H1 (cell line): ENCODE measurements at regions of chr17 and their contacts with region 1.

Region 1: DNA sequence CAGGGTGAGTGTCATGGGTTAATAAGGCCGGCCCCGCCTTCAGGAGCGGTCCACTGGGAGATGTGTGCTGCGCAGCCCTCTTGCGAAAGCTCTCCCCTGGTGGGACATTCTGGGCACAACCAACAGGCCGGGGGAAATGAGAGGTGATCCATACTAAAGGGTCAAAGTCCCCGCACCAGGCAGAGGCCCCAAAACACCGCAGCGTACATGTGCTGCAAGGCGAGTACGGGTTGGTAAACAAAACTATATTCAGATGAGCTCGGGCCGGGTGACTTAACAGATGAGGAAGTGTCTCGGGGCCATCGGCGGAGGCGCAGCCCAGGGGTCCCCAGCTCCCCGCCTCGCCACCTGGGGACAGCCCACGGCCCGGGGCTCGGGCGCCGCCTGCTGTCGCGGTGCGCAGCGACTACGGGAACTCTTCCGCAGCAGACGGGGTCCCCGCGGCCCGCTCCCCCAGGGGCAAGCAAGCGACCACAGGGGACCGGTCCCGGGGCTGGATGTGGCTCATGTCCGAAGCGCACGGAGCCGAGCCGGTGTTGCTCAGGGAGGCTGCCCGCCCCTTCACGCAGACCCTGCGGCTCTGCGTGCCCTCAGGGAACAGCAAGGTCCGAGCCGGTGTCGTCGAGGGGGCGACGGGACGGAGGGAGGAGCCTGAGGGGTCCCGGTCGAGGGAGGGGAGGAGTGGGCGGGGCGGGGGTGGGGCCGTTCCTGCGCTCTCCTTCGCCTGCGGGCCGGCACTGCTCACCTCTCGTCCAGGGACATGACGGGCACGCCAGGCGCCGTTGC is at the start of gene RAB37:
- DNase-seq: peak in 1 of 2 experiments; percentile 86
- H3K4me3 ChIP-seq: peak within 1 kb of the TSS; percentile 55 to 75 (median 66)
- H3K27ac ChIP-seq: no peak within 1 kb of the TSS
- H3K4me1 ChIP-seq: peaks cover 5 to 18% (median 9%) of the 10 kb centered on the region in 4 experiments
- H3K27me3 ChIP-seq: peaks cover 0 to 8% (median 2%) of the 10 kb centered on the region in 4 experiments; a peak in 4 of 7 replicates
- CTCF ChIP-seq: peak; percentile 41 to 64 (median 60)
- EP300 ChIP-seq: peak in 1 of 2 experiments; percentile 16; a peak in 1 of 3 replicates
- POLR2A ChIP-seq: no peak
- RAD21 ChIP-seq: peak; percentile 46 to 65; a peak in 3 of 4 replicates
- total RNA-seq, gene RAB37: 5.2 and 5.5 TPM in 2 replicates

Region 2: DNA sequence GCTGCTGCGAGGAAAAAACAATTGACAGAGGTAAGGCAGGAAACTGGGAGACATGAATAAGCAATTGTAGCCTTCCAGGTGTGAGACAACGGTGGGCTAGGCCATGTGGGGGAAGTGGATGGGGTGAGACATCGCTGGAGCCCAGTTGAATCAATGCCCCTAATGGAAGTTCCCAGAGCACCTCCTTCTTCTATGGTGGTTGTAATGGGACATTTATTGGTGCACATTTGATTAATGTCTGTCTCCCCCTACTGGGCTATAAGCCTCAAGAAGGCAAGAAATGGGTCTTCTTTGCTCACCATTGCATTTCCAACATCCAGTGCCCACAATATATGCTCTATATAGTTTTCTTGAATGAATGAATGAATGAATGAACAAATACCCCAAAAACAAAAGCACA is 90.5 kb before region 1 on chr17:
- CTCF ChIA-PET with region 1: interaction called, 17 read pairs
- POLR2A ChIA-PET with region 1: no interaction called
- DNase-seq: no peak
- H3K4me3 ChIP-seq: no peak overlapping the region
- H3K27ac ChIP-seq: no peak overlapping the region
- H3K4me1 ChIP-seq: peaks cover 0 to 2% (median 2%) of the 10 kb centered on the region in 4 experiments; a peak in 2 of 7 replicates
- H3K27me3 ChIP-seq: peaks cover 0 to 2% (median 0%) of the 10 kb centered on the region in 4 experiments; a peak in 2 of 7 replicates
- CTCF ChIP-seq: peak in 2 of 3 experiments; percentile 49 to 54; a peak in 3 of 4 replicates
- EP300 ChIP-seq: no peak
- POLR2A ChIP-seq: no peak
- RAD21 ChIP-seq: peak; percentile 51 to 59

Region 3: GRCh38 chr17:74671031-74671771 is 65.5 kb before region 1 on chr17:
- CTCF ChIA-PET with region 1: interaction called, 19 read pairs
- POLR2A ChIA-PET with region 1: interaction called, 4 read pairs
- DNase-seq: peak; percentile 81 to 97
- H3K4me3 ChIP-seq: peak overlapping the region in 2 of 4 experiments; percentile 11 to 32; a peak in 2 of 8 replicates
- H3K27ac ChIP-seq: no peak overlapping the region
- H3K4me1 ChIP-seq: no peaks in the 10 kb centered on the region; a peak in 1 of 7 replicates
- H3K27me3 ChIP-seq: peaks cover 10 to 53% (median 35%) of the 10 kb centered on the region in 4 experiments
- CTCF ChIP-seq: no peak
- EP300 ChIP-seq: no peak
- POLR2A ChIP-seq: no peak
- RAD21 ChIP-seq: no peak; a peak in 1 of 4 replicates

Region 4: DNA sequence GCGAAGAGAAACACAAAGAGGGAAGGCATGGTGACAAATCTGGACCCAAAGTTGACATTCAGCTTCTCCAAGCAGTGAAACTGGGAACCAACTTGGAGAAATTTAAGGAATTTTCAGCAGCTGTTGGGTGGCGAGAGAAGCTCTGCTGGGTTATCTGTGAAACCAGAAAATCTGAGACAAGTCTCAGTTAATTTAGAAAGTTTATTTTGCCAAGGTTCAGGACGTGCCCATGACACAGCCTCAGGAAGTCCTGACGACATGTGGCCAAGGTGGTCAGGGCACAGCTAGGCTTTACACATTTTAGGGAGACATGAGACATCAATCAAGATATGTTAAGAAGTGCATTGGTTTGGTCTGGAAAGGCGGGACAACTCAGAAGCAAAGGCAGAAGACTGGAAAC is 12.8 kb before region 1 on chr17:
- CTCF ChIA-PET with region 1: interaction called, 27 read pairs
- POLR2A ChIA-PET with region 1: no interaction called
- DNase-seq: no peak
- H3K4me3 ChIP-seq: no peak overlapping the region
- H3K27ac ChIP-seq: no peak overlapping the region
- H3K4me1 ChIP-seq: no peaks in the 10 kb centered on the region
- H3K27me3 ChIP-seq: no peaks in the 10 kb centered on the region; a peak in 3 of 7 replicates
- CTCF ChIP-seq: no peak
- EP300 ChIP-seq: no peak
- POLR2A ChIP-seq: no peak
- RAD21 ChIP-seq: no peak

Region 5: GRCh38 chr17:74770498-74771318 is 34.0 kb after region 1 on chr17:
- CTCF ChIA-PET with region 1: interaction called, 37 read pairs
- POLR2A ChIA-PET with region 1: interaction called, 12 read pairs
- DNase-seq: peak in 1 of 2 experiments; percentile 82
- H3K4me3 ChIP-seq: no peak overlapping the region
- H3K27ac ChIP-seq: no peak overlapping the region; the same call in 1 of the 2 replicates
- H3K4me1 ChIP-seq: peaks cover 0 to 2% (median under 1%) of the 10 kb centered on the region in 4 experiments; a peak in 3 of 7 replicates
- H3K27me3 ChIP-seq: no peaks in the 10 kb centered on the region
- CTCF ChIP-seq: peak; percentile 93 to 99 (median 96)
- EP300 ChIP-seq: no peak
- POLR2A ChIP-seq: no peak; a peak in 1 of 3 replicates
- RAD21 ChIP-seq: peak; percentile 96

Region 6: DNA sequence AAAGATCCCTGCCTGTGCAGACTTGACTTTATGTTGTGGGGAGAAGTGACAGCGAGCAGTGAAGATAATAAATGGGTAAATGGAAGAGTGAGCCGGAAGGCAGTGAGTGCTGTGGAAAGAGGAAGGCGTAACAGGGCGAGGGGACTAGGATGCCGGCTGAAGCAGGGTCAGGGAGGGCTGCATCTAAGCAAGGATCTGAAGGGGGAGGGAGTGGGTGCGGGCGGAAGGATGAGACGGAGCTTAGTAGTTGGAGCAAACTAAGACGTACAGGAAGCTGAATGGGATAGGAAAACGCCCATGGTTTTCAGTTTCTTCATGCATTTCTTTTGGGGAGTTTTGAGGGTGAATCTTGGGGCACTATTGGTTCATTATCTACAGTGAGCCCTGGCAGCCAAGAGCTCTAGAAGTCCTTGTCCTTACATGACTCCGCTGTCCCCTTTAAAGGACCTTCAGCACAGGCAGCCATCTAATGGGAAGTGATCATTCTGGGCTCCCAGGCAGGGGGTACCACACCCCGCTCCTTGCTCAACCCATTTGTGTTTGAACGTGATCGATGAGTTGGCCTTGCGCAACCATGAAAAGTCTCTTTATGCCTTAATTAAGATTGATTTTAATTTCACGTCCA is 49.8 kb after region 1 on chr17:
- CTCF ChIA-PET with region 1: interaction called, 18 read pairs
- POLR2A ChIA-PET with region 1: interaction called, 3 read pairs
- DNase-seq: no peak
- H3K4me3 ChIP-seq: no peak overlapping the region
- H3K27ac ChIP-seq: no peak overlapping the region
- H3K4me1 ChIP-seq: peaks cover 0 to 3% (median 3%) of the 10 kb centered on the region in 4 experiments; a peak in 5 of 7 replicates
- H3K27me3 ChIP-seq: no peaks in the 10 kb centered on the region
- CTCF ChIP-seq: no peak
- EP300 ChIP-seq: no peak
- POLR2A ChIP-seq: no peak
- RAD21 ChIP-seq: no peak

Region 7: GRCh38 chr17:74864866-74865395 is 128.2 kb after region 1 on chr17:
- CTCF ChIA-PET with region 1: interaction called, 15 read pairs
- POLR2A ChIA-PET with region 1: no interaction called
- DNase-seq: peak in 1 of 2 experiments; percentile 95
- H3K4me3 ChIP-seq: no peak overlapping the region
- H3K27ac ChIP-seq: no peak overlapping the region
- H3K4me1 ChIP-seq: peaks cover 0 to 7% (median 5%) of the 10 kb centered on the region in 4 experiments; a peak in 4 of 7 replicates
- H3K27me3 ChIP-seq: peaks cover 21 to 23% (median 21%) of the 10 kb centered on the region in 4 experiments
- CTCF ChIP-seq: peak; percentile 92 to 97 (median 96)
- EP300 ChIP-seq: no peak
- POLR2A ChIP-seq: no peak
- RAD21 ChIP-seq: peak; percentile 81 to 86